ENCODE measurements at regions of chr2 and their contacts with region 1.

Region 1: GRCh38 chr2:149330126-149331022 is at the start of gene LYPD6:
- DNase-seq: peak; percentile 38
- ATAC-seq: peak; percentile 92
- H3K4me3 ChIP-seq: peak within 1 kb of the TSS; percentile 65 to 69
- H3K27ac ChIP-seq: peak within 1 kb of the TSS; percentile 66
- H3K4me1 ChIP-seq: peaks cover 6 to 14% of the 10 kb centered on the region in 2 experiments; a peak in 2 of 4 replicates
- H3K27me3 ChIP-seq: no peaks in the 10 kb centered on the region
- CTCF ChIP-seq: peak in 2 of 3 experiments; percentile 7 to 9; a peak in 1 of 6 replicates
- POLR2A ChIP-seq: peak; percentile 3
- RAD21 ChIP-seq: no peak
- total RNA-seq, gene LYPD6: 3.0 TPM

Region 2: GRCh38 chr2:149040451-149040850 is 289.9 kb before region 1 on chr2:
- CTCF ChIA-PET with region 1: interaction called, 4 read pairs
- POLR2A ChIA-PET with region 1: no interaction called
- RAD21 ChIA-PET with region 1: no interaction called
- intact Hi-C with region 1: loop called (anchors 1 kb)
- DNase-seq: peak; percentile 42
- ATAC-seq: peak; percentile 20
- H3K4me3 ChIP-seq: no peak overlapping the region
- H3K27ac ChIP-seq: no peak overlapping the region
- H3K4me1 ChIP-seq: peaks cover 2 to 15% of the 10 kb centered on the region in 2 experiments; a peak in 2 of 4 replicates
- H3K27me3 ChIP-seq: no peaks in the 10 kb centered on the region
- CTCF ChIP-seq: peak; percentile 25 to 74 (median 64); a peak in 4 of 6 replicates
- POLR2A ChIP-seq: no peak
- RAD21 ChIP-seq: peak; percentile 48

Region 3: GRCh38 chr2:149355716-149356422 is 25.5 kb after region 1 on chr2:
- CTCF ChIA-PET with region 1: no interaction called
- POLR2A ChIA-PET with region 1: no interaction called
- RAD21 ChIA-PET with region 1: no interaction called
- intact Hi-C with region 1: no loop called
- DNase-seq: no peak
- ATAC-seq: no peak
- H3K4me3 ChIP-seq: no peak overlapping the region
- H3K27ac ChIP-seq: no peak overlapping the region
- H3K4me1 ChIP-seq: no peaks in the 10 kb centered on the region
- H3K27me3 ChIP-seq: no peaks in the 10 kb centered on the region
- CTCF ChIP-seq: no peak
- POLR2A ChIP-seq: no peak
- RAD21 ChIP-seq: no peak